Activated T-helper 2 cell treated with anti-CD3 and anti-CD28 coated beads, Interferon-gamma antibody, Interleukin-2, Interleukin-4, amounts not matched to agents 10 μg/mL and 5 μg/mL and 100 μg/mL, durations not matched to agents 14 hours and 24 hours and 36 hours (primary cell): ENCODE measurements at regions of chr6 and their contacts with region 1.

Region 1: DNA sequence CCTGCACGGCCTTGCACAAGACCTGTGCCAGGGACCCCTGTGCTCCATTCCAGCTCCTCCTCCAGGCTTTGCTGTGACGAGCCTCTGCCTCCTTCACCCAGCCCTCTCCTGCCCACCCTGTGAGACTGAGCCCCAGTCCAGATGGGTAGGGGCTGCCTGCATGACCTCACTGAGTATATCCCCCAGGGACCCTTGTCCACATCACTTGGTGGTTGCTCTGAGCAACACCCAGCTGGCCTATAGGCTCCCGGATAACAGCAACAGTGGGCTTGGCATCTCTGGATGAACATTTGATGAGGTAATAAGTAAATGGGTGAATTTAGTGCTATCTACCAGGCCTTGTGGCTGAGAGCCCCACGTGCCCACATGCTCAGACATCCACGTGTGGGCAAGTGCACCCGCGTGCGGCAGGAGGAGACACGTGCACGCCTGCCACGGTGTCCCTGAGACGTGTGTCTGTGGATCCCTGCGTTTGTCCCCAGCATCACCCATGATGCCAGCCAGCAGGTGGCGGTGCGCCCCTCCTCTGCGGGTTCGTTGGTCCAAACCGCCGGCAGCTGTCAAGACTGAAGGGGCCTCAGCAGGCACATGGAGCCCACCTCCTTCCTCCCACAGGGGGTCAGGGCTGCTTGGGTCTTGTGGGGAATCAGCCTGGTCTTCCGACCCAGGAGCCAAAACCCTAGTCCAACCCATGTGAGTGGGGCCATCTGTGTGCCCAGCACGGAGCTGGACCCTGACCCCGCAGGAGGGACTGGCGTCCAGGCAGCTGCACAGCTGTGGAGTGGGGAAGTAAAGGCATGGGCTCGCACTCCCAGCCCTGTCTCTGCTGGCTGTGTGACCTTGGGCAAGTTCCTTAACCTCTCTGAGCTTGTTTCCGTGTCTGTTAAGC is 45.9 kb downstream of the FGD2 start:
- DNase-seq: peak; percentile 77
- H3K4me3 Mint-ChIP-seq: peak overlapping the region; percentile 47
- H3K27ac Mint-ChIP-seq: peak overlapping the region; percentile 99
- H3K4me1 Mint-ChIP-seq: peaks cover 54% of the 10 kb centered on the region
- H3K27me3 Mint-ChIP-seq: no peaks in the 10 kb centered on the region

Region 2: GRCh38 chr6:36955671-36956445 is 95.5 kb before region 1 on chr6:
- intact Hi-C with region 1: no loop called
- DNase-seq: no peak
- H3K4me3 Mint-ChIP-seq: no peak overlapping the region
- H3K27ac Mint-ChIP-seq: no peak overlapping the region
- H3K4me1 Mint-ChIP-seq: peaks cover 34% of the 10 kb centered on the region
- H3K27me3 Mint-ChIP-seq: peaks cover 23% of the 10 kb centered on the region

Region 3: GRCh38 chr6:37029249-37029971 is 22.0 kb before region 1 on chr6:
- intact Hi-C with region 1: loop called (anchors 1 kb)
- DNase-seq: peak; percentile 33
- H3K4me3 Mint-ChIP-seq: no peak overlapping the region
- H3K27ac Mint-ChIP-seq: peak overlapping the region; percentile 56
- H3K4me1 Mint-ChIP-seq: peaks cover 53% of the 10 kb centered on the region
- H3K27me3 Mint-ChIP-seq: no peaks in the 10 kb centered on the region

Region 4: DNA sequence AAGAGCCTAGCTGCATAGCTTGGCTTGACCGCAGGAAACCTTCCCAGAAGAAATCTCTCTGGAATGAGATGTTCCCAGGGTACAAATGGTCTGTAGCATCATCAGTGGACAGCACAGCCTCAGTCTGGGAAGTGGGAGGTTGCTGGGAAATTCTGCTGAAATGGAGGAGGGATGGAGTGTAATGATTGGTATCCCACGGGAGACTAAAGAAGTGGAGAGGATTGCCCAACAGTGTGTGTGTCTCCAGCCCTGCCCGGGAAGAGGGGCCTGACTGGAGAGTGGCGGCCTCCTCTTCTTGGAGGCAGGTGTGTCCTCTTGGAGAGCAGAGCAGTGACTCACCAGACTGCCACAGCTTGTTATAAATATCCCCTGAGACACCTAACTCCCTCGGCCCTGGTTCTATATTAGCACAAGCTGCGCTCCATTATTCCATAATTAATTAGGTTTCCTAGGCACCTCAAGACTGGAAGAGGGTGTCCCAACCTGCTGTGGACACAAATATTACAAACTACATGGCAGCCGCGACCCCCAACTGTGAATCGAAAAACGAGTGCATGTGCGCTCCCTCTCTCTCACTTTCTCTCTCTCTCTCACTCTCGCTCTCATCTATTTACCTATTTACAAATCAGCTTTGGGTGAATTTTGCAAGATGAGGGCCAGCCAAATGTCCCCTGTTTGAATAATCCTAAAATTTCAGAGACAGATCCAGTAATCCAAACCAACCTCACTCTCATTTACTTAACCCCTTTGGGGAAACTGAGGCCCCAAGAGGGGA is 22.9 kb after region 1 on chr6:
- intact Hi-C with region 1: no loop called
- DNase-seq: no peak
- H3K4me3 Mint-ChIP-seq: no peak overlapping the region
- H3K27ac Mint-ChIP-seq: no peak overlapping the region
- H3K4me1 Mint-ChIP-seq: peaks cover 18% of the 10 kb centered on the region
- H3K27me3 Mint-ChIP-seq: peaks cover 4% of the 10 kb centered on the region

Region 5: GRCh38 chr6:37102279-37103168 is 51.1 kb after region 1 on chr6:
- intact Hi-C with region 1: loop called (anchors 5 kb)
- DNase-seq: peak; percentile 67
- H3K4me3 Mint-ChIP-seq: peak overlapping the region; percentile 72
- H3K27ac Mint-ChIP-seq: peak overlapping the region; percentile 80
- H3K4me1 Mint-ChIP-seq: peaks cover 34% of the 10 kb centered on the region
- H3K27me3 Mint-ChIP-seq: no peaks in the 10 kb centered on the region